HEK293 (cell line): ENCODE measurements at regions of chr14 and their contacts with region 1.

Region 1: GRCh38 chr14:29503903-29504302 is 423.7 kb downstream of the PRKD1 start:
- H3K4me3 ChIP-seq: no peak overlapping the region
- H3K27ac ChIP-seq: no peak overlapping the region
- H3K4me1 ChIP-seq: no peaks in the 10 kb centered on the region
- CTCF ChIP-seq: no peak

Region 2: DNA sequence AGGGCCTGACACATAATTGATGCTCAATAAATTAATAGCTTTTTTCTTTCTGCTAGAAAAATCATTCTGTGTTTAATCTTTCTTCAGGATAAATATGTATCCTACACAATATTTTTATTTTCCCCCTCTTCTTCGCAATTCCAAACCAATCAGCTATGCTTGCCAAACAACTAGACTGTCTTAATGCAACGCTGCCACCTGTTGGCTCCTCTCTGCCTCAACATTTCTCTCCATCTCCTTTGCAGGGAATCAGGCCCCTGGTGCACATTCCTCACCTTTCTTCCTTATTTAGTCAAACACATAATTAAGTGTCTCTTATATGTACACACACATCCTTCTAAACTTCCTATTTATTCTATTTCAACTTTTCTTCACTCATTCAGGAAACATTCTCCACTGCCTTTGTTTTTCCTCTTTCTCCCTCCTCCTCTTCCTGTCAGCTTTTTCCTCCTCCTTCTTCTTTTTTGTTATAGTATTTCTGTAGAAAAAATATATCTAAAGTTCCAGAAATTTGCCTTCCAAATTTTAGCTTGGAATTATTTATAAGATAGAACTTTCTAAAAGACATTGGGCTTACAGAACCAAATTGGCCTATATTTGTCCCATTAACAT is 17.7 kb after region 1 on chr14:
- CTCF ChIA-PET with region 1: interaction called, 11 read pairs
- POLR2A ChIA-PET with region 1: no interaction called
- H3K4me3 ChIP-seq: no peak overlapping the region
- H3K27ac ChIP-seq: no peak overlapping the region
- H3K4me1 ChIP-seq: no peaks in the 10 kb centered on the region
- CTCF ChIP-seq: no peak

Region 3: DNA sequence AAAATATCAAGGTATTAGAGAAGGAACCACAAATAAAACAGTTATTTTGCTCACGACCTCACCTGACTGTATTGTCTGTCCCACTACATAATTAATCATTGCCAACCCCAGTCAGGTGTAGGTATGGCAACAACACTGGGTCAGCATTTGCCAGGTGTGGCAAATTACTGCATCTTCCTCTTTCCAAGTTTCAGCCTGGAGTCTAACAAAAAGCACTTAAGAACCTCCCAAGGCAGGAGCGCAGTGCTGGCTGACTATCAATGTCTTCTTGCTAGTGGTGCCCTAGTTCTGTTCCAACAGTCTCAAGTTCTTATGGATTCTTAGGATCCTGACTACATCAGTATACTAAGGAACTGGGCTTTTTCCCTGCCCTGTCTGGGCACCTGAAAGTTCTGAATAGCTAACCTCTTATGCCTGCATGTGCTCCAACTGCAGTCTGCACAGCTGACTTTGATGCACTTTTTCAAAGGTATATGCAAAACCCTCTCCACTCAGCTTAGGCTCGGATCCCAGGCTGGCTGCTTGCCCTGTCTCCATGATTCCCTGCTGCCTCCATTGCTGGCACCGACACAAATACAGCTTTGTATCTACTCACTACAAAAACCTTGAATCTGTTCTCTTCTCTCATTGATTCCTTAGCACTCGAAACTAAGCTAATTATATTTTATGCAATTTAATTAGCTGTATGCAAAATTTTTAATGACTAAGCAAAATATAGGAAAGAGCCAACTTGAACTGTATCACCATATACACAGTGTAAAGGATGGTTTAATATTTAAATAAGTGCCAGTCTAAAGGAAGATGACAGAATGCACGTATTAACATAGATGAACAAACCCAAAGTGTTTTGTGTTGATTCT is 310.5 kb after region 1 on chr14:
- CTCF ChIA-PET with region 1: no interaction called
- POLR2A ChIA-PET with region 1: no interaction called
- H3K4me3 ChIP-seq: no peak overlapping the region
- H3K27ac ChIP-seq: no peak overlapping the region
- H3K4me1 ChIP-seq: peaks cover 11% of the 10 kb centered on the region
- CTCF ChIP-seq: no peak